ENCODE measurements at regions of chr3 and their contacts with region 1.

Region 1: DNA sequence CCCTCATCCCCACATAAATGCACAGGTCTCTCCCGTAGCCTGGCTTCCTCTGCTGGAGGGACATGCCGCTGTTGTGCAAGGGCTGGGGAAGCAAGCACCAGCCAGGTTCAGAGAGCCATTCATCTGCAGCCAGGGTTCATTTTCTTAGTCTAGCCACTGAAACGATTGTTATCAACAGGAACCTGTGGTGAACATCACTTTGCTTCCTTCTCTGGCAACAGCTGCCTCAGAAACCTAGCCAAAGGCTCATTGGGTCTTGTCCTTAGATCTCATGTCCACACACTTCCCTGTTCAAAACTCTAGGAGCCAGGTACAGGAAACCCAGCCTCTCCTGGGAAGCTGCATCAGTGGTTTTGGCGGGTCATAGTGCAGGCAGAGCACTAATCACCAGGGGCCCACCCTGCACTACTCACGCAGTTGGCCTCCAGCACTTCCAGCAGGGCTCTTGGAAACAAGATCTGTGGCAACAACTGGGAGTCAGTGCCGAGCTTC is 47.0 kb downstream of the OXNAD1 start:
- DNase-seq: peak in 1 of 2 donors; percentile 45
- ATAC-seq: peak; percentile 76 to 94 (median 90)
- H3K4me3 ChIP-seq: no peak overlapping the region
- H3K27ac ChIP-seq: peak overlapping the region in 8 of 10 donors; percentile 34 to 79 (median 62)
- H3K4me1 ChIP-seq: peaks cover 5 to 42% (median 19%) of the 10 kb centered on the region in 9 donors
- H3K27me3 ChIP-seq: no peaks in the 10 kb centered on the region
- CTCF ChIP-seq: no peak

Region 2: DNA sequence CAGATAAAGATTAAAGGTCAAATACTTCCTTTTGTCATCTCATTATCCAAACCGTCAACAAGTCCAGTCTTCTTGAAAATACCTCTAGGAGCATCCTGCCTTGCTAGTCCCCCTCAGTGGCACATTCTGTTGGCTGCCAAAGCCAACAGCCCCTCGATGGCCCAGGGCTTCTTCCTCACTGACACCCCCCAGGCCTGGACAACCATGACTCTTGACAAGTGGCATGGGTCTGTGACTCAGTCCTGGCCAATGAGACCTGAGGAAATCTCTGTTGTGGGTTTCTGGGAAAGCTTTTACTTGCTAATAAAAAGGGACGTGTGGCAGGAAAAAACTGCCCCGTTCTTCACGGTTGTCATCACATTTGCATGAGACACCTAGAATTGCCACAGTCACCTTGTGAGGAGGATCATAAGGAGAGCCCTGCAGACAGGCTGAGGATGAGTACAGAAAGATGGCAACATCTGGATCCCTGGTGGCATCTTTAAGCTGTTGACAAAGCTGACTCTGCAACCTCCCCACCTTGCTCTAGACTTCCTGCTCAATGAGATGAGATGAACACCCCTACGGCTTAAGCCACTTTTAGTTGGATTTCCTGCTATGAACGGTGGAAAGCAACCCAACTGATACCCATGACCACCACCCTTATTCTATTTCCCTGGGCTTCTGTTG is 34.5 kb after region 1 on chr3:
- intact Hi-C with region 1: no loop called
- DNase-seq: no peak
- ATAC-seq: no peak
- H3K4me3 ChIP-seq: no peak overlapping the region
- H3K27ac ChIP-seq: no peak overlapping the region
- H3K4me1 ChIP-seq: peaks cover 0 to 20% (median 11%) of the 10 kb centered on the region in 9 donors
- H3K27me3 ChIP-seq: no peaks in the 10 kb centered on the region
- CTCF ChIP-seq: no peak

Region 3: GRCh38 chr3:16357186-16358147 is 45.5 kb after region 1 on chr3:
- intact Hi-C with region 1: loop called in 1 of 10 experiments (anchors 5 kb)
- DNase-seq: peak in 1 of 2 donors; percentile 48
- ATAC-seq: peak; percentile 51 to 85 (median 64)
- H3K4me3 ChIP-seq: no peak overlapping the region
- H3K27ac ChIP-seq: peak overlapping the region in 5 of 10 donors; percentile 19 to 73 (median 55)
- H3K4me1 ChIP-seq: peaks cover 0 to 59% (median 30%) of the 10 kb centered on the region in 9 donors
- H3K27me3 ChIP-seq: no peaks in the 10 kb centered on the region
- CTCF ChIP-seq: peak in 1 of 9 donors; percentile 22

Region 4: DNA sequence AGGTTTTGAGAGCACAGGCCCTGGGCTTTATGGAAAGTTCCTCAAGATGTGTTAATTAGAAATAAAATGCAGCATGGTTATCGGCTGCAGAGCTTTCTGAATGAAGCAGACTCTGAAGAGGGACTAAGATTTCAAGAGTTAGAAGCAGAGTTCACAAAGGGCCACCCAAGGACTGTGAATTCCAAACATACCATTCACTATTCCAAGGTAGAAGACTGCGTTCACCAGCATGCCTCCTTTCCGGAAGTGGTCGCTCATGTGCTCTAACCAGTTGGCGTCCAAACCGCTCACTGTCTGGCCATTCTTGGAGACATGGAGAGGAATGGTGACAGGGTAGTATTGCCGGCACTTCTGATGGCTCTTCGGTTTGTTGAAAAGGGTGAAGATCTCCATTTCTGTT is 57.9 kb after region 1 on chr3:
- intact Hi-C with region 1: loop called in 1 of 10 experiments (anchors 5 kb)
- DNase-seq: no peak
- ATAC-seq: no peak
- H3K4me3 ChIP-seq: no peak overlapping the region
- H3K27ac ChIP-seq: peak overlapping the region in 7 of 10 donors; percentile 22 to 83 (median 65)
- H3K4me1 ChIP-seq: peaks cover 28 to 89% (median 68%) of the 10 kb centered on the region in 9 donors
- H3K27me3 ChIP-seq: no peaks in the 10 kb centered on the region
- CTCF ChIP-seq: no peak